Esophagus muscularis mucosa (tissue), 4 donors: ENCODE measurements at regions of chr7 and their contacts with region 1.

Region 1: GRCh38 chr7:140924019-140924820 is 509 bp downstream of the BRAF start:
- DNase-seq: peak; percentile 94
- H3K4me3 ChIP-seq: peak overlapping the region; percentile 89 to 100 (median 99)
- H3K27ac ChIP-seq: peak overlapping the region; percentile 99 to 100 (median 100)
- H3K4me1 ChIP-seq: peaks cover 24 to 49% (median 41%) of the 10 kb centered on the region in 4 donors
- H3K27me3 ChIP-seq: no peaks in the 10 kb centered on the region
- CTCF ChIP-seq: peak; percentile 43 to 45 (median 44)
- EP300 ChIP-seq: no peak
- POLR2A ChIP-seq: no peak

Region 2: GRCh38 chr7:140696680-140697446 is 227.4 kb before region 1 on chr7 and contains the start of gene NDUFB2:
- intact Hi-C with region 1: loop called (anchors 5 kb)
- DNase-seq: peak; percentile 94
- H3K4me3 ChIP-seq: peak within 1 kb of the TSS; percentile 73 to 99 (median 87)
- H3K27ac ChIP-seq: peak within 1 kb of the TSS; percentile 89 to 94 (median 93)
- H3K4me1 ChIP-seq: peaks cover 29 to 37% (median 34%) of the 10 kb centered on the region in 4 donors
- H3K27me3 ChIP-seq: no peaks in the 10 kb centered on the region
- CTCF ChIP-seq: no peak
- EP300 ChIP-seq: no peak
- POLR2A ChIP-seq: peak; percentile 88
- total RNA-seq, gene NDUFB2: 235 to 279 (median 262) TPM

Region 3: GRCh38 chr7:141097430-141097829 is 173.2 kb after region 1 on chr7:
- intact Hi-C with region 1: no loop called
- DNase-seq: no peak
- H3K4me3 ChIP-seq: no peak overlapping the region
- H3K27ac ChIP-seq: no peak overlapping the region
- H3K4me1 ChIP-seq: no peaks in the 10 kb centered on the region
- H3K27me3 ChIP-seq: no peaks in the 10 kb centered on the region
- CTCF ChIP-seq: no peak
- EP300 ChIP-seq: no peak
- POLR2A ChIP-seq: no peak

Region 4: DNA sequence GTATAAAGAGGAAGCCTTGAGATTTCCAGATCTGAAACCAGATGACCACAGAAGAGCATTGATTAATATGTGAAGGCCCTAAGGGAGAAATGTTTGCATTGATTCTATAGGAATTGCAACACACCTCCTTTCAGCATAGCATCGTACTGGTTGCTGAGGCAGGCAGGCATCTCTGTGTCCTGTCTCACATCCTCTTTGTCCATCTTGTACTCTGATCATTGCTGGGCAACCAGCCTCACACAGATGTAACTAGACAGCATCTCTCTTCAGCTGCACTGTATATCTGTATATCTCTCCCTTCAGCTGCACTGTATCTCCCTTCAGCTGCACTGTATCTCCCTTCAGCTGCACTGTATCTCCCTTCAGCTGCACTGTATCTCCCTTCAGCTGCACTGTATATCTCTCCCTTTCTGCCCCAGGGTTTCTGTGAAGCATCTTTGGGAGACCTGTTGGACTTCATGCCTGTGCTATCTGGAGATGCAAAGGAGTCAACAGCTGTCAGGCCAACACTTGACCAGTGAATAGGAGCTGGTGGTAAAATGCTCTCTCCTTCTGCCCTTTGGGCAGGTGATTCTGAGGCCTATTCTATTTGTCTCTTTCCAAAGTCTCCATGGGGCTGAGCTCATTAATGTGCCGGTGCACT is 189.9 kb after region 1 on chr7:
- intact Hi-C with region 1: no loop called
- DNase-seq: no peak
- H3K4me3 ChIP-seq: no peak overlapping the region
- H3K27ac ChIP-seq: no peak overlapping the region
- H3K4me1 ChIP-seq: no peaks in the 10 kb centered on the region
- H3K27me3 ChIP-seq: no peaks in the 10 kb centered on the region
- CTCF ChIP-seq: no peak
- EP300 ChIP-seq: no peak
- POLR2A ChIP-seq: no peak